Aorta (tissue), 5 donors: ENCODE measurements at regions of chr10 and their contacts with region 1.

Region 1: GRCh38 chr10:78349911-78350663 is 316.4 kb downstream of the RPS24 start:
- DNase-seq: no peak
- ATAC-seq: no peak
- H3K4me3 ChIP-seq: no peak overlapping the region
- H3K27ac ChIP-seq: no peak overlapping the region
- H3K4me1 ChIP-seq: no peaks in the 10 kb centered on the region
- H3K27me3 ChIP-seq: no peaks in the 10 kb centered on the region

Region 2: GRCh38 chr10:77965294-77965693 is 384.8 kb before region 1 on chr10:
- intact Hi-C with region 1: no loop called
- DNase-seq: peak in 1 of 2 donors; percentile 3
- ATAC-seq: no peak
- H3K4me3 ChIP-seq: no peak overlapping the region
- H3K27ac ChIP-seq: no peak overlapping the region
- H3K4me1 ChIP-seq: no peaks in the 10 kb centered on the region
- H3K27me3 ChIP-seq: no peaks in the 10 kb centered on the region

Region 3: GRCh38 chr10:78381107-78381506 is 31.0 kb after region 1 on chr10:
- intact Hi-C with region 1: loop called in 1 of 2 experiments (anchors 2 kb)
- DNase-seq: peak in 1 of 2 donors; percentile 9
- ATAC-seq: no peak
- H3K4me3 ChIP-seq: no peak overlapping the region
- H3K27ac ChIP-seq: no peak overlapping the region
- H3K4me1 ChIP-seq: no peaks in the 10 kb centered on the region
- H3K27me3 ChIP-seq: no peaks in the 10 kb centered on the region

Region 4: GRCh38 chr10:78502210-78502936 is 152.3 kb after region 1 on chr10:
- intact Hi-C with region 1: no loop called
- DNase-seq: no peak
- ATAC-seq: no peak
- H3K4me3 ChIP-seq: no peak overlapping the region
- H3K27ac ChIP-seq: no peak overlapping the region
- H3K4me1 ChIP-seq: no peaks in the 10 kb centered on the region
- H3K27me3 ChIP-seq: no peaks in the 10 kb centered on the region